ENCODE measurements at regions of chr10 and their contacts with region 1.

Region 1: GRCh38 chr10:117603726-117604125 is 61.2 kb downstream of the EMX2 start:
- DNase-seq: no peak
- H3K4me3 ChIP-seq: no peak overlapping the region
- H3K27ac ChIP-seq: no peak overlapping the region
- H3K4me1 ChIP-seq: peaks cover 3% of the 10 kb centered on the region
- H3K27me3 ChIP-seq: peaks cover 2% of the 10 kb centered on the region
- CTCF ChIP-seq: no peak

Region 2: DNA sequence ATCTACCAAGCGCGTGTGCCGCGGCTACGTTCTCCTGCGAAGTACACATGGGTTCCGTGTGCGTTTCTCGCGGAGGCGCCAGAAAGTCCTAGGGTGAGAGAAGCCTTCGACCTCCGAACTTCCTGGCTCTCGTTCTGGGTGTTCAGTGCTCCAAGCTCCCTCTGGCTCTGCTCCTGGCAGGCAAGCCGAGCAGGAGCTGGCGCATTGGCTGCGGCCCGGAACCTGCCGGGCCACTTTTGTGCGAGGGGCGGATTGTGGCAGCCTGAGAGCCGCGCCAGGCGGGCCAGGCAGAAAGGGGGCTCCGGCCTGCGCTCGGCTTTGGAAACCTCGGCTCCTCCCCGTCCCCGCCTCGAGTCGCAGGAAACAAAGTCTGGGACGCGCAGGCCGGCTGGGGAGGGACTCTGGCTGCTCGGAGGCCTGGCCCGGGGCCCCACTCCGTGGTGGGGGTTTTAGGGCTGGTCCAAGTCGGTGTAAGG is 51.5 kb before region 1 on chr10:
- CTCF ChIA-PET with region 1: no interaction called
- dilution Hi-C with region 1: loop called (anchors 5 kb)
- in situ Hi-C with region 1: no loop called
- intact Hi-C with region 1: no loop called
- DNase-seq: no peak
- H3K4me3 ChIP-seq: no peak overlapping the region
- H3K27ac ChIP-seq: no peak overlapping the region
- H3K4me1 ChIP-seq: peaks cover 4% of the 10 kb centered on the region
- H3K27me3 ChIP-seq: peaks cover 77% of the 10 kb centered on the region
- CTCF ChIP-seq: no peak

Measured in mammary epithelial cell (primary cell).